ENCODE measurements at regions of chr3 and their contacts with region 1.

Region 1: GRCh38 chr3:184344579-184345316 is 7.3 kb downstream of the FAM131A start:
- DNase-seq: no peak
- H3K4me3 ChIP-seq: no peak overlapping the region
- H3K27ac ChIP-seq: no peak overlapping the region
- H3K4me1 ChIP-seq: peaks cover 26% of the 10 kb centered on the region
- H3K27me3 ChIP-seq: no peaks in the 10 kb centered on the region
- CTCF ChIP-seq: no peak

Region 2: DNA sequence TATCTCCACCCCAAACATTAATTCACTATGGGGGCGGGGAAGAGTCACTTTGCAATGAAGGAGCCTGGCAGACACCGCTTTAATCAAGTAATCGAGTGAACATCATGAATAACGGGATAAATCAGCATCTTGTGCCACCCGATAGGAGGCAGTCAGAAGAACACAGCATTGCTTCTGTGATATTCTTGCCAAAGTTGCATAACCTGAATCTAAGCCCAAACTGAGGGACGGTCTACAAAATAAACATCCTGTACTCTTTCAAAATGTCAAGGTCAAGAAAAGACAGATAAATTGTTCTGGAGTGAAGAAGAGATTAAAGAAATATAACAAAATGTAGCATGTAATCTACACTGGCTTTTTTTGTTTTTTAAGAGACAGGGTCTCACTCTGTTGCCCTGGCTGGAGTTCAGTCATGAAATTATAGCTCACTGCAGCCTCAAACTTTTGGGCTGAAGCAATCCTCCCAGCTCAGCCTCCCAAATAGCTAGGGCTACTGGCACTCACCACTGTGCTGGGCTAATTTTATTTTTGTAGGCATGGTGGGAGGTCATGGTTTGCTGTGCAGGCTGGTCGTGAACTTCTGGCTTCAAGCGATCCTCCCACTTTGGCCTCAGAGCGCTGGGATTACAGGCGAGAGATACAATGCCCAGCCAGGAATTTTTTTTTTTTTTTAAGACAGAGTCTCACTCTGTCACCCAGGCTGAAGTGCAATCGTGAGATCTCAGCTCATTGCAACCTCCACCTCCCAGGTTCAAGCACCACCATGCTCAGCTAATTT is 135.4 kb before region 1 on chr3:
- CTCF ChIA-PET with region 1: no interaction called
- POLR2A ChIA-PET with region 1: no interaction called
- intact Hi-C with region 1: no loop called
- DNase-seq: no peak
- H3K4me3 ChIP-seq: no peak overlapping the region
- H3K27ac ChIP-seq: no peak overlapping the region
- H3K4me1 ChIP-seq: no peaks in the 10 kb centered on the region
- H3K27me3 ChIP-seq: peaks cover 15% of the 10 kb centered on the region
- CTCF ChIP-seq: no peak

Region 3: GRCh38 chr3:184275961-184276910 is 68.5 kb before region 1 on chr3 and contains the start of gene ECE2:
- CTCF ChIA-PET with region 1: no interaction called
- POLR2A ChIA-PET with region 1: interaction called, 12 read pairs
- intact Hi-C with region 1: no loop called
- DNase-seq: no peak
- H3K4me3 ChIP-seq: no peak within 1 kb of the TSS
- H3K27ac ChIP-seq: no peak within 1 kb of the TSS
- H3K4me1 ChIP-seq: no peaks in the 10 kb centered on the region
- H3K27me3 ChIP-seq: peaks cover 24% of the 10 kb centered on the region
- CTCF ChIP-seq: no peak
- total RNA-seq, gene ECE2: not detected in 2 replicates

Region 4: DNA sequence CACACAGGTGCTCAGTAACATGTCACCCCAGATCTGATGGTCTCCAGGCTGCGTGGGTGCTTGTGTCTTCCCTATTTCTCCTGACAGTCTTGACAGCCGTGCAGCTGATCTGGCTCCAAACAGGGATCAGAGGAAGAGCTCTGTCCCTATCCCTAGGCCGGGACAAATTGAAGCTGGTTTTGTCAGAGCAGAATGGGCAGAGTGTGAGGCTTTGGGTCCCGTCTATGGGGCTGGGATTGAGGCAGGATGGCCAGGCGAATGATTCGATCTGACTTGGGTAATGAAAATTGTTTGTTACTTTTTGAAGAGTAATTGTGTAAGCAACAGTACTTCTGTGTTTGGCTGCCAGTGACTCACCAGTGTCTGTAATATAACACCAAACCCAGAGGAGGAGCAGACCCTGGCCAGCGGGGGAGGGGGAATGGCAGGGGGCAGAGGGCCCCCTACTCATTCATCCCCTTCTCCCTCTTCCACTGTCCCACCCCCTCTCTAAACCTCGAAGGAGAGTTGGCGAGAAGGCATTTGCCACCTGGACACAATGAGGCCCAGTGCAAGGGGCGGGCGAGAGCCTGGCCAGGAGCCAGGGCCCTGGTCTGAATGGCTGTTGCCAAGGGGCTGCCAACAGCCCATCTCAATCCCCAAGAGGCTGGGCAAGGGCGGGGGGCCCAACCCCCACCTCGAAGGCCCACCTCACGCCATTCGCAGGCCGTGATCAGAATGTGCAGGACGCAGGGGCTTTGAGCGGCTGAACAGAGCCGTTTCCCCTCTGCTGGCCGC is 372.1 kb after region 1 on chr3:
- CTCF ChIA-PET with region 1: no interaction called
- POLR2A ChIA-PET with region 1: no interaction called
- intact Hi-C with region 1: no loop called
- DNase-seq: peak; percentile 69
- H3K4me3 ChIP-seq: peak overlapping the region; percentile 16
- H3K27ac ChIP-seq: peak overlapping the region; percentile 49
- H3K4me1 ChIP-seq: peaks cover 44% of the 10 kb centered on the region
- H3K27me3 ChIP-seq: no peaks in the 10 kb centered on the region
- CTCF ChIP-seq: no peak; the same call in 1 of the 2 replicates